ENCODE measurements at regions of chr6 and their contacts with region 1.

Region 1: GRCh38 chr6:150741633-150742504 is 123.6 kb upstream of the MTHFD1L start:
- DNase-seq: no peak
- H3K4me3 Mint-ChIP-seq: no peak overlapping the region
- H3K27ac Mint-ChIP-seq: no peak overlapping the region
- H3K4me1 Mint-ChIP-seq: peaks cover 16% of the 10 kb centered on the region
- H3K27me3 Mint-ChIP-seq: no peaks in the 10 kb centered on the region
- CTCF ChIP-seq: no peak

Region 2: GRCh38 chr6:150711584-150712504 is 30.0 kb before region 1 on chr6:
- CTCF ChIA-PET with region 1: no interaction called
- intact Hi-C with region 1: loop called (anchors 5 kb)
- DNase-seq: peak; percentile 49
- H3K4me3 Mint-ChIP-seq: no peak overlapping the region
- H3K27ac Mint-ChIP-seq: peak overlapping the region; percentile 67
- H3K4me1 Mint-ChIP-seq: peaks cover 19% of the 10 kb centered on the region
- H3K27me3 Mint-ChIP-seq: no peaks in the 10 kb centered on the region
- CTCF ChIP-seq: no peak